Right ventricle myocardium inferior (tissue), 1 donor: ENCODE measurements at regions of chr6 and their contacts with region 1.

Region 1: GRCh38 chr6:9044426-9044825 is 609.1 kb upstream of the SLC35B3 start:
- DNase-seq: no peak
- ATAC-seq: no peak

Region 2: GRCh38 chr6:8334113-8334512 is 710.3 kb before region 1 on chr6:
- intact Hi-C with region 1: loop called (anchors 5 kb)
- DNase-seq: no peak
- ATAC-seq: no peak

Region 3: GRCh38 chr6:9143140-9143539 is 98.7 kb after region 1 on chr6:
- intact Hi-C with region 1: no loop called
- DNase-seq: no peak
- ATAC-seq: no peak